GM10248 (cell line): ENCODE measurements at regions of chr11 and their contacts with region 1.

Region 1: GRCh38 chr11:108620958-108621772 is 27.6 kb upstream of the EXPH5 start:
- DNase-seq: peak; percentile 55
- CTCF ChIP-seq: no peak

Region 2: GRCh38 chr11:106988151-106989077 is 1632.8 kb before region 1 on chr11:
- CTCF ChIA-PET with region 1: no interaction called
- POLR2A ChIA-PET with region 1: no interaction called
- DNase-seq: no peak
- CTCF ChIP-seq: no peak

Region 3: GRCh38 chr11:108538022-108538424 is 83.1 kb before region 1 on chr11:
- CTCF ChIA-PET with region 1: no interaction called
- POLR2A ChIA-PET with region 1: no interaction called
- DNase-seq: no peak
- CTCF ChIP-seq: no peak

Region 4: GRCh38 chr11:108609681-108610080 is 11.5 kb before region 1 on chr11:
- CTCF ChIA-PET with region 1: interaction called, 21 read pairs
- POLR2A ChIA-PET with region 1: no interaction called
- DNase-seq: no peak
- CTCF ChIP-seq: no peak

Region 5: DNA sequence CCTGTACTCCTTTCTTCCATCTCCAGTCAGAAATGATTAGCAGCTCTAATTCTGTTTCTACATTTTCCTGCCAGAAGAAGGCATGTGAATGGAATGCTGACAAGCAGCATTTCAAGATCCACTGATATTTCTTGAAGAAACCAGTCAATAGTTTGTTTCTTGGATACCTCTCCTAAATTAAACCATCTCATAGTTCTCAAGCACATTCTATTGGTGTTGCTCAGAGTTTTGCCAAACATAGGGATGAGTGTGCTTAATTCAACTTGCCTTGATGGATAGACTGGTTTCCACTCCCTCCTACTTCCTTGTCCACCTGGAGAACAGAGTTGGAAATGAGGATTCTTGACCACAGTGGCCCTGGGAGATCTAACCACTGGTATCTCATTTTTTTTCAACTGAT is 13.9 kb after region 1 on chr11:
- CTCF ChIA-PET with region 1: interaction called, 16 read pairs
- POLR2A ChIA-PET with region 1: interaction called, 3 read pairs
- DNase-seq: no peak
- CTCF ChIP-seq: no peak